B cell (primary cell): ENCODE measurements at regions of chr16 and their contacts with region 1.

Region 1: GRCh38 chr16:4350787-4351659 is at the start of gene PAM16:
- DNase-seq: peak; percentile 97
- ATAC-seq: peak; percentile 92
- H3K4me3 ChIP-seq: peak within 1 kb of the TSS; percentile 56 to 84 (median 81)
- H3K4me3 Mint-ChIP-seq: peak within 1 kb of the TSS; percentile 96
- H3K27ac ChIP-seq: peak within 1 kb of the TSS; percentile 57 to 78
- H3K27ac Mint-ChIP-seq: peak within 1 kb of the TSS; percentile 95
- H3K4me1 ChIP-seq: peaks cover 9 to 17% of the 10 kb centered on the region in 2 donors
- H3K4me1 Mint-ChIP-seq: peaks cover 22% of the 10 kb centered on the region
- H3K27me3 ChIP-seq: no peaks in the 10 kb centered on the region
- H3K27me3 Mint-ChIP-seq: no peaks in the 10 kb centered on the region
- CTCF ChIP-seq: peak; percentile 33
- total RNA-seq, gene PAM16: 56.6 and 57.3 TPM in 2 replicates

Region 2: GRCh38 chr16:4365014-4365406 is 14.0 kb after region 1 on chr16:
- CTCF ChIA-PET with region 1: interaction called, 7 read pairs
- POLR2A ChIA-PET with region 1: no interaction called
- intact Hi-C with region 1: loop called (anchors 2 kb)
- DNase-seq: peak; percentile 86
- ATAC-seq: peak; percentile 89
- H3K4me3 ChIP-seq: no peak overlapping the region
- H3K4me3 Mint-ChIP-seq: peak overlapping the region; percentile 64
- H3K27ac ChIP-seq: peak overlapping the region; percentile 27 to 37
- H3K27ac Mint-ChIP-seq: peak overlapping the region; percentile 78
- H3K4me1 ChIP-seq: peaks cover 6 to 42% of the 10 kb centered on the region in 2 donors
- H3K4me1 Mint-ChIP-seq: peaks cover 25% of the 10 kb centered on the region
- H3K27me3 ChIP-seq: no peaks in the 10 kb centered on the region
- H3K27me3 Mint-ChIP-seq: no peaks in the 10 kb centered on the region
- CTCF ChIP-seq: no peak

Region 3: GRCh38 chr16:4371357-4372000 is 20.5 kb after region 1 on chr16 and contains the start of gene VASN:
- CTCF ChIA-PET with region 1: no interaction called
- POLR2A ChIA-PET with region 1: no interaction called
- intact Hi-C with region 1: loop called (anchors 1 kb)
- DNase-seq: peak; percentile 81
- ATAC-seq: peak; percentile 87
- H3K4me3 ChIP-seq: peak within 1 kb of the TSS in 3 of 5 experiments; percentile 38 to 60 (median 47)
- H3K4me3 Mint-ChIP-seq: peak within 1 kb of the TSS; percentile 84
- H3K27ac ChIP-seq: no peak within 1 kb of the TSS
- H3K27ac Mint-ChIP-seq: no peak within 1 kb of the TSS
- H3K4me1 ChIP-seq: peaks cover 18 to 25% of the 10 kb centered on the region in 2 donors
- H3K4me1 Mint-ChIP-seq: peaks cover 29% of the 10 kb centered on the region
- H3K27me3 ChIP-seq: no peaks in the 10 kb centered on the region
- H3K27me3 Mint-ChIP-seq: no peaks in the 10 kb centered on the region
- CTCF ChIP-seq: no peak
- total RNA-seq, gene VASN: 0.66 and 0.76 TPM in 2 replicates

Region 4: GRCh38 chr16:4416200-4417032 is 65.4 kb after region 1 on chr16 and contains the start of gene CORO7:
- CTCF ChIA-PET with region 1: no interaction called
- POLR2A ChIA-PET with region 1: no interaction called
- intact Hi-C with region 1: loop called (anchors 1 kb)
- DNase-seq: peak; percentile 99
- ATAC-seq: peak; percentile 90
- H3K4me3 ChIP-seq: peak within 1 kb of the TSS; percentile 62 to 94 (median 78)
- H3K4me3 Mint-ChIP-seq: peak within 1 kb of the TSS; percentile 96
- H3K27ac ChIP-seq: peak within 1 kb of the TSS; percentile 91 to 95
- H3K27ac Mint-ChIP-seq: peak within 1 kb of the TSS; percentile 95
- H3K4me1 ChIP-seq: peaks cover 24 to 35% of the 10 kb centered on the region in 2 donors
- H3K4me1 Mint-ChIP-seq: peaks cover 31% of the 10 kb centered on the region
- H3K27me3 ChIP-seq: no peaks in the 10 kb centered on the region
- H3K27me3 Mint-ChIP-seq: no peaks in the 10 kb centered on the region
- CTCF ChIP-seq: no peak
- total RNA-seq, gene CORO7: 114 and 117 TPM in 2 replicates

Region 5: DNA sequence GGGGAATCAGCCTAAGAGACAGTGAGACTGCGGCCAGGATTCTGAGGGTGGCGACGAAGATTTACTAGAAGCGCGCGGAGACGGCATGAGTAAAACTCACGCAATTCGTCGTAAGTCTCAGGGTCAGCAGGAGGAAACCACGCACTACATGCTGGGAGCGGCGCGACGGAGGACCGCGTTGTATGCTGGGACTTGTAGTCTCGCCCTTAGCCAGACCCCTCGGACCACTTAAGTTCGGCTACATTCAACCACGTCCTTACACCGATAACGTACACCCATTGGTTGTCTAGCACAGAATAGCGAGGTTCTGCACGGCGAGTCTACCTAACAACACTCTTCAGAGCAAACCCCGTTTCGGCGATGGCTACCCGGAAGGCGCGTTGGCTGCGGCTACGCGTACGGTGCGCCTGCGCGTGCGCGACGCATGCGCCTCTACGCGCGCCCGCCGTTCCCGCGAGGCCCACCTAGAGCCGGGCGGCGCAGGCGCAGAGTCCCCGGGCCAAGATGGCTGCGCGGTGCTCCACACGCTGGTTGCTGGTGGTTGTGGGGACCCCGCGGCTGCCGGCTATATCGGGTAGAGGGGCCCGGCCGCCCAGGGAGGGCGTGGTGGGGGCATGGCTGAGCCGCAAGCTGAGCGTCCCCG is 74.5 kb after region 1 on chr16 and contains the start of gene DNAJA3:
- CTCF ChIA-PET with region 1: no interaction called
- POLR2A ChIA-PET with region 1: no interaction called
- intact Hi-C with region 1: loop called (anchors 2 kb)
- DNase-seq: peak; percentile 98
- ATAC-seq: peak; percentile 92
- H3K4me3 ChIP-seq: peak within 1 kb of the TSS; percentile 80 to 99 (median 89)
- H3K4me3 Mint-ChIP-seq: peak within 1 kb of the TSS; percentile 97
- H3K27ac ChIP-seq: peak within 1 kb of the TSS; percentile 93 to 96
- H3K27ac Mint-ChIP-seq: peak within 1 kb of the TSS; percentile 100
- H3K4me1 ChIP-seq: peaks cover 14 to 20% of the 10 kb centered on the region in 2 donors
- H3K4me1 Mint-ChIP-seq: peaks cover 25% of the 10 kb centered on the region
- H3K27me3 ChIP-seq: no peaks in the 10 kb centered on the region
- H3K27me3 Mint-ChIP-seq: no peaks in the 10 kb centered on the region
- CTCF ChIP-seq: no peak
- total RNA-seq, gene DNAJA3: 59.3 and 68.1 TPM in 2 replicates

Region 6: GRCh38 chr16:4538350-4539235 is 187.6 kb after region 1 on chr16 and contains the start of gene CDIP1:
- CTCF ChIA-PET with region 1: no interaction called
- POLR2A ChIA-PET with region 1: no interaction called
- intact Hi-C with region 1: loop called (anchors 1 kb)
- DNase-seq: peak; percentile 99
- ATAC-seq: peak; percentile 91
- H3K4me3 ChIP-seq: peak within 1 kb of the TSS; percentile 7 to 93 (median 73)
- H3K4me3 Mint-ChIP-seq: peak within 1 kb of the TSS; percentile 92
- H3K27ac ChIP-seq: peak within 1 kb of the TSS; percentile 87 to 95
- H3K27ac Mint-ChIP-seq: peak within 1 kb of the TSS; percentile 96
- H3K4me1 ChIP-seq: peaks cover 7 to 13% of the 10 kb centered on the region in 2 donors
- H3K4me1 Mint-ChIP-seq: peaks cover 14% of the 10 kb centered on the region
- H3K27me3 ChIP-seq: no peaks in the 10 kb centered on the region
- H3K27me3 Mint-ChIP-seq: no peaks in the 10 kb centered on the region
- CTCF ChIP-seq: peak; percentile 24
- total RNA-seq, gene CDIP1: 18.0 and 20.3 TPM in 2 replicates